ENCODE measurements at regions of chr10 and their contacts with region 1.

Region 1: GRCh38 chr10:92689663-92690210 is at the start of gene HHEX:
- DNase-seq: peak; percentile 79
- ATAC-seq: peak; percentile 75
- H3K4me3 Mint-ChIP-seq: peak within 1 kb of the TSS; percentile 86
- H3K27ac Mint-ChIP-seq: peak within 1 kb of the TSS; percentile 92
- H3K4me1 Mint-ChIP-seq: peaks cover 45% of the 10 kb centered on the region
- H3K27me3 Mint-ChIP-seq: no peaks in the 10 kb centered on the region
- CTCF ChIP-seq: no peak
- total RNA-seq, gene HHEX: 50.3 and 55.1 TPM in 2 replicates

Region 2: DNA sequence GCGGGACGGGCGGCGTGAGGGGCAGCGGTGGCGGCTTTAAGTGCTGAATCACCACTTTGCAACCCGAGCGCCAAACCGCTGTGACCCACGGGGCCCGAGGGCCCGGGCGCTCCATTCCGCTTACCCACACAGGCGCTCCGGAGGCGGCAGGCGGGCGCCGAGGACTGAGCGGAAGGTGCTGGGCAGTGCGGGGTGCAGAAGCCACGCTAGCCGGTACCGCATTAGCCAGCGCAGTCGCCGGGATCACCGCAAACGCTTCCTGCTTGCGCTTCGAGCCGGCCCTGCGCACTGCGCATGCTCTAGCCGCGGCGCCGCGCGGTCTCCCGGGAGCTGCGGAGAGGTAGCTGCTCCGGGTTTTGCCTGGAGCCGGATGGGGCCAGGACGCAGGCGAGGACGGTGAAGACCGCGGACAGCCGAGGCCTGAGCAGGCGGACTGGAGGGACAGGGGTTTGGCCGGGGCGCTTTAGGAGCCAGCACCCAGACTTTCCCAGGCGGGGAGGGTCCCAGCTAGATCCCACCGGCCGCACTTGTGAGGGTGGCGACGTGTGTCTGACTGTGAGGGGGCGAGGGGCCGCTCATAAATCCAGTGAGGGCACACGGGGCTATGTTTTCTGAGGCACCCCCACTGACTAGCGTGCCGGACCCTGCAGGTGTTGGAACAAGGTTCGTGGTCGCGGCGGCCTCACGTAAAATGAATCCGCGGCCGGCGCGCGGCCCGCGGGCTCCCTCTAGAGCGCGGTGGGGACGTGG is 115.8 kb before region 1 on chr10 and contains the start of gene IDE:
- CTCF ChIA-PET with region 1: no interaction called
- POLR2A ChIA-PET with region 1: interaction called, 11 read pairs
- intact Hi-C with region 1: no loop called
- DNase-seq: peak; percentile 84
- ATAC-seq: peak; percentile 76
- H3K4me3 Mint-ChIP-seq: peak within 1 kb of the TSS; percentile 88
- H3K27ac Mint-ChIP-seq: peak within 1 kb of the TSS; percentile 85
- H3K4me1 Mint-ChIP-seq: peaks cover 40% of the 10 kb centered on the region
- H3K27me3 Mint-ChIP-seq: no peaks in the 10 kb centered on the region
- CTCF ChIP-seq: no peak
- total RNA-seq, gene IDE: 37.7 and 39.2 TPM in 2 replicates

Region 3: DNA sequence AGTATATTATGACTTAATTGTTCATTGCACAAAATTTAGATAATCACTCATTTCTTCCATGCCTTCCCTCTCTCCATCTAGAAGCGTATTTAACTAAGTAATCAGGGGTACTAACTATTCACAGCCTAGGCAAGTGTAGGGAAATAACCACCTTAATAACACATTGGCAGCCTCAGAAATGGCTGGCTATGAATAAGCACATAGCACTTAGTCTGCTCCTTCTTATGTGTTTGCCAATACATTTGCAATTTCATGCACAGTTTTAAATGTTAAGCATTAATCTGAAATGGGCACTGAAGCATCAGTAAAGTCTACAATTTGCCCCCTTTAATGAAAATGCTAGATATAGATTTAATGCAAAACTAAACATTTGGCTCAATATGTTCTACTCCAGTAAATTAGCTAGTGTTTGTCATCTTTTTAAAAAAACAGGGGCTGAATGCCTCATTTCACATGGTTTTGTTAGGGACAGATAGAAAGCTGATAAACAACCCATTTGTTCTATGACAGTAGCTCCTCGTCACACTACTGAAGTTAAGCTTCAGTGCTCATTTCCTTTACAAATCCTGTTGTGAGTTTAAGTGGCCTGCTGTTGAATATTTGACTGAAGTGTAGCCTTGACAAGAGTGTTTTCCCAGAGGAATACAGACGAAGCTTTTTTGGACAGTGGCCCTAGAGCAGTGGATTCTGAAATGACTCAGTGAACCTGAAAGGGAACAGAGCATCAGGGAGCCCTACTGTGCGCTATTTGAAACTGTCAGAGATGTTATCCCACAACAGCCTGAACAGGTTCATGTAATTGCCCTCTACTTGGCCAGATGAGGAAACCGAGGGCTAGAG is 30.5 kb after region 1 on chr10:
- CTCF ChIA-PET with region 1: no interaction called
- POLR2A ChIA-PET with region 1: interaction called, 58 read pairs
- intact Hi-C with region 1: no loop called
- DNase-seq: no peak
- ATAC-seq: peak; percentile 45
- H3K4me3 Mint-ChIP-seq: peak overlapping the region; percentile 35
- H3K27ac Mint-ChIP-seq: no peak overlapping the region
- H3K4me1 Mint-ChIP-seq: peaks cover 47% of the 10 kb centered on the region
- H3K27me3 Mint-ChIP-seq: no peaks in the 10 kb centered on the region
- CTCF ChIP-seq: no peak

Region 4: GRCh38 chr10:92747600-92747999 is 57.9 kb after region 1 on chr10:
- CTCF ChIA-PET with region 1: no interaction called
- POLR2A ChIA-PET with region 1: interaction called, 105 read pairs
- intact Hi-C with region 1: loop called (anchors 1 kb)
- DNase-seq: no peak
- ATAC-seq: peak; percentile 86
- H3K4me3 Mint-ChIP-seq: no peak overlapping the region
- H3K27ac Mint-ChIP-seq: peak overlapping the region; percentile 81
- H3K4me1 Mint-ChIP-seq: peaks cover 74% of the 10 kb centered on the region
- H3K27me3 Mint-ChIP-seq: no peaks in the 10 kb centered on the region
- CTCF ChIP-seq: no peak

Region 5: GRCh38 chr10:92822060-92822634 is 132.4 kb after region 1 on chr10:
- CTCF ChIA-PET with region 1: interaction called, 5 read pairs
- POLR2A ChIA-PET with region 1: interaction called, 16 read pairs
- intact Hi-C with region 1: no loop called
- DNase-seq: no peak
- ATAC-seq: no peak
- H3K4me3 Mint-ChIP-seq: peak overlapping the region; percentile 24
- H3K27ac Mint-ChIP-seq: peak overlapping the region; percentile 63
- H3K4me1 Mint-ChIP-seq: peaks cover 26% of the 10 kb centered on the region
- H3K27me3 Mint-ChIP-seq: no peaks in the 10 kb centered on the region
- CTCF ChIP-seq: no peak